ENCODE measurements at regions of chr16 and their contacts with region 1.

Region 1: DNA sequence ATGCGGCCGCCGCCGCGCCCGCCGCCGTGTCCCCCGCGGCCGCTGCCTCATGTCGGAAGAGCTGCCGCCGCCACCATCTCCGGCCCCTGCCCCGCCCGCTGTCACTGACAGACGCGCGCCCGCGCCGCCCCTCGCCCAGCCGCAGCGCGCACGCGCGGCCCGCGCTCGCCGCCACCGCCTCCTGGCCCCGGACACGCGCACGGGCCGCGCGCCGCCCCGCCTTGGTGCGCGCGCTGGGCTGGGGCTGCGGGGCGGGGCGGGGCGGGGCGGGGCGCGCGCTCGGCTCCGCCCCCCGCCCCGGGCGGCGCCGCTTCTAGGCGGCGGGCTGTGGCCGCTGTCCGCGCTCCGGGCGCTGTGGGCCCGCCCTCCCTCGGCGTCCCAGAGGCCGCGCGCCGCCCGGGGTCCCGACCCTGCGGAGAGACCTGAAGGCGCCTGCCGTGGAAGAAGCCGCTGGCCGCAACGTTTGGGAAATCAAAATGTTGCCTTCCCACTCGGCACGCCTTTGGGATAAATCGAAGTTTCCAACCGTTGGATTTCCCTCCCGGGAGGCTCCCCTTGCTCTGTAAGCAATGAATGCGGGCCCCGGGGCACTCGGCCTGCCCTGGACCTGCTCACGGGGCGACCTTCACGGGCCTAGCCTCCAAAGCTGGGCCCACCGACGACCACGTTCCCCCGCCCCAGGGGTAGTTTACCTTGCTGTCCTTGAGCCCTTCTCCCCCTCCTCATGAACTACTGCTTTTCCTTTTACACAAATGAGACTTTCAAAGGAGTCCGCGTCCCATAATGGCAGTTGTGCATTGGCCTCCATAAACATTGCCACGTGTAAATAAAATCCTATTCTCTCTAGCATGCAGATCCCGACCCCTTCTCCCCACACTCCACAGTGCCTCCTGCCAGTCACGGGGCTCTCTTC is at the start of gene ADCY9:
- DNase-seq: peak; percentile 92
- ATAC-seq: peak; percentile 85
- total RNA-seq, gene ADCY9: 48.2 TPM

Region 2: DNA sequence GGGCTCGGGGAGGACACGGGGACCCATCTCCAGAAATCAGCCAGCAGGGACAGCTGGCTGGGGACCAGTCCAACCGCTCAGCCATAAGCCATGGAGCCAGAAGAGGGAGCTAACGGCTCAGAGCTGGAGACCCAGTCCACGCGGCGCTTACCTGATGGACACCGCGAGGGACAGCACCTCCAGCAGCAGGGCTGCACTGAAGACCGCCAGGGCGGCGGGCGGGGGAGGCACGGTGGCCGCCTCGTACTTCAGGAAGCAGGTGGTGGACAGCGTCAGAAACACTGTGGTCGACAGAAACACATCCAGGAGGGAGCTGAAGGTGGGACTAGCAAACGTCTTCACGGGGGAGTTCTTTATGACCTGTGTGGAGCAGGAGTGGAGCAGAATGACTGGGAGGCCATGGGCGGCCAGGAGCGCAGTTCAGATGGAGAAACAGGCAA is 133.5 kb before region 1 on chr16:
- intact Hi-C with region 1: loop called (anchors 5 kb)
- DNase-seq: peak; percentile 76
- ATAC-seq: peak; percentile 90

Region 3: GRCh38 chr16:4053301-4053845 is 63.2 kb before region 1 on chr16:
- intact Hi-C with region 1: loop called (anchors 5 kb)
- DNase-seq: peak; percentile 80
- ATAC-seq: peak; percentile 77

Region 4: GRCh38 chr16:4183237-4184036 is 66.8 kb after region 1 on chr16:
- intact Hi-C with region 1: loop called (anchors 5 kb)
- DNase-seq: peak; percentile 96
- ATAC-seq: peak; percentile 96

Region 5: GRCh38 chr16:4194661-4195060 is 78.1 kb after region 1 on chr16:
- intact Hi-C with region 1: no loop called
- DNase-seq: no peak
- ATAC-seq: no peak

Region 6: GRCh38 chr16:4253394-4254150 is 137.0 kb after region 1 on chr16:
- intact Hi-C with region 1: loop called (anchors 2 kb)
- DNase-seq: peak; percentile 100
- ATAC-seq: peak; percentile 99

Region 7: GRCh38 chr16:4538350-4539235 is 422.0 kb after region 1 on chr16 and contains the start of gene CDIP1:
- intact Hi-C with region 1: no loop called
- DNase-seq: peak; percentile 97
- ATAC-seq: peak; percentile 96
- total RNA-seq, gene CDIP1: 46.3 TPM